CD8-positive, alpha-beta T cell (primary cell): ENCODE measurements at regions of chr11 and their contacts with region 1.

Region 1: DNA sequence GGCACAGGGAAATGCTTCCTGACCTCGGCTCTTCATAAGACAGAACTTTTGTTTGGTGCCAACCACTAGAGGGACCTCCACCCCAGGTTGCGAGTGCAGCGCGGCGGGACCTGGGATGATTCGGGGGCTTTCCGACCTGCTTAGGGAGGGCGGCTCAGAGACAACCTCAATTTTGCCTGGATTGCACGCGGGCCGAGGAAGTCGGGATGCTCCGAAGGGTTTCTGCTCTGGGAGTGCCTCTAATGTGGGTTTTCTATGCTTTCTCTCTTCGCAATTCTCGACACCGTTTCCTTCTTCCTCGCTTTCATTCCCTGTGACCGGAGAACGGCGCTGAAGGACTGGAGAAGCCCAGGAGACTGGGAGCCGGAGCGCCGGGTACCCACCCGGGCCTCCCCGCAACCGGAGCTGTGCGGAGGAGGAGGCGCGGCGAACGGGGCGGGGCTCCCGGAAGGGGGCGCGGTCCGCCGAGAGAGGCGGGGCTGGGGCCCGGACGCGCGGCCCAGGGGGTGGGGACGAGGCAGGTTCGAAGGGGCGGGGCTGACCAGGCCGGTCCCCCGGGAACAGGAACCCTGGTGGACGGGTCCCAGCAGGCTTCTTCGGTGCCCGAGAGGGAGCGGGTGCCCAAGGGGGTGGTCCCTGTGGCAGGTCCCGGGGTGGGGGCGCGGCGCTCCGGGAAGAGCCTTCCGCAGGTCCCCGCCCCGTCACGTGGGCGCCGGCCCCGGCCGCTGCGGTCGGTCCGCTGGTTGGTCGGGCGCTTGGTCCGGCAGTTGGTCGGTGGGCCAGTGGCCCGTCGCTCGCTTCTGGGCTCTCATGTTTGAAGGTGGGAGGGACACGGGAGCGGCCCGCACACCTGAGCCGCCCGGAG is at the start of gene PPFIBP2:
- DNase-seq: peak; percentile 67 to 91 (median 82)
- ATAC-seq: peak; percentile 84
- H3K4me3 ChIP-seq: peak within 1 kb of the TSS; percentile 93 to 96
- H3K4me3 Mint-ChIP-seq: peak within 1 kb of the TSS; percentile 96
- H3K27ac ChIP-seq: peak within 1 kb of the TSS; percentile 84 to 97
- H3K27ac Mint-ChIP-seq: peak within 1 kb of the TSS; percentile 96
- H3K4me1 ChIP-seq: peaks cover 43% of the 10 kb centered on the region
- H3K4me1 Mint-ChIP-seq: peaks cover 57% of the 10 kb centered on the region
- H3K27me3 ChIP-seq: no peaks in the 10 kb centered on the region
- H3K27me3 Mint-ChIP-seq: no peaks in the 10 kb centered on the region
- CTCF ChIP-seq: peak; percentile 68
- total RNA-seq, gene PPFIBP2: 21.6 to 26.7 TPM

Region 2: DNA sequence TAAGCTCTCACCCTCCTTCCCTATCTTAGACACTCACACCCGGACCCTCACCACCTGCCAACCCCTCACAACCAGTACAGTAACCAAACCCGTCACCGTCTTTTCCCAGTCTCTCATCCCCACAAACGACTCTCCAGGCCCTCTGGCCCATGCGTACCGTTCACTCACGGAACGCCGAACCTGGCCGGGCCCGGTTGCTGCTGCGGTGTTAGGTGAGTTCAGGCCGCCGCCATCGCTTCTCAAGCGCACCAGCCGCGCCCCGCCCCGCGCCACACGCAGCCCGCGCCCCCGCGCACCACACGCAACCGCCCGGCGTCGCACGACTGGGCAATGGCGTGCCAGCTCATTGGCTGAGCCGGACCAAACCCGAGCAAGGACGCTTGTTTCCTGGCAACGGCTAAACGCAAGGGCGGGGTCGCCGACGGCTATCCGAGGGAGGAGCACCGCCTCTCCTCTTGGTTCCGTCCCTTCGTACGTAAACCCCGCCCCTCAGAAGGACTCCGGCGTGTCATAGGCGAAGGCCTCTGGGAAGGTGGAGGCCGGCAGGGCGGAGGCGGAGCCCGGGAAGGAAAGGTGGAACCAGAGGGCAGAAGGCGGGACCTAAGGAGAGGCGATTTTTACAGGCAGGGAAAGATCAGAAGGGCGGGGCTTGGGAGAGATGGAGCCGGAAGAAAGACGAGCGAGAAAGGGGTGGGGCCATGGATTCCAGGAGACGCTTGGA is 1278.9 kb before region 1 on chr11 and contains the start of gene FHIP1B:
- CTCF ChIA-PET with region 1: no interaction called
- POLR2A ChIA-PET with region 1: no interaction called
- intact Hi-C with region 1: loop called in 1 of 2 experiments (anchors 10 kb)
- DNase-seq: peak; percentile 98 to 100 (median 99)
- ATAC-seq: peak; percentile 91
- H3K4me3 ChIP-seq: peak within 1 kb of the TSS; percentile 85 to 89
- H3K4me3 Mint-ChIP-seq: peak within 1 kb of the TSS; percentile 98
- H3K27ac ChIP-seq: peak within 1 kb of the TSS; percentile 76 to 88
- H3K27ac Mint-ChIP-seq: peak within 1 kb of the TSS; percentile 96
- H3K4me1 ChIP-seq: peaks cover 21% of the 10 kb centered on the region
- H3K4me1 Mint-ChIP-seq: peaks cover 45% of the 10 kb centered on the region
- H3K27me3 ChIP-seq: no peaks in the 10 kb centered on the region
- H3K27me3 Mint-ChIP-seq: no peaks in the 10 kb centered on the region
- CTCF ChIP-seq: no peak
- total RNA-seq, gene FHIP1B: 38.3 to 38.6 TPM

Region 3: DNA sequence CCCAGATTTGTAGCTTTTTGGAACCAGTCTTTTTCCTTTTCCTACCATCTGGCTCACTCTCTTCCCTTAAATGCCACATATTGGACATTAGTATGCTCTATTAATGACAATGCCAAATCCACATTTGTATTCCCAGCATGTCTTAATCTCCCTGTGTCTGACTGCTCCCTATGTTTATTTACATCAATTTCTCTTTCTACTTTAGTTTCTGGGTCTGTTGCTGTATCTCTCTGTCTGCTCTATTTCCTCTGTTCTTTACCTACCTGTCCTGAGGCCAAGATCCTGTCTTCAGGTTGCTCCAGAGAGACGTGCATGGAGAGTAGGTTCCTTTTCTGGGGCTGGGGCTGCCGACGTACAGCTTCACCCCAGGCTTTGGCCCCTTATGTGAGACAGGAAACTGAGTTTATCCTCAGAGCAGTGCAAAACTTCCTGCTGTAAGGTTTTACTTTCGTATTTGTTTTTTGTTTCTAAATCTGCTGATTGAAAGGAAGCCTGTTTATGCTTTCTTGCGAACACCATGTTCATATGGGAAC is 767.3 kb before region 1 on chr11:
- CTCF ChIA-PET with region 1: no interaction called
- POLR2A ChIA-PET with region 1: no interaction called
- intact Hi-C with region 1: loop called in 1 of 2 experiments (anchors 5 kb)
- DNase-seq: peak in 8 of 9 experiments; percentile 26 to 82 (median 55)
- ATAC-seq: peak; percentile 84
- H3K4me3 ChIP-seq: peak overlapping the region; percentile 61 to 65
- H3K4me3 Mint-ChIP-seq: no peak overlapping the region
- H3K27ac ChIP-seq: peak overlapping the region; percentile 69 to 89
- H3K27ac Mint-ChIP-seq: no peak overlapping the region
- H3K4me1 ChIP-seq: peaks cover 57% of the 10 kb centered on the region
- H3K4me1 Mint-ChIP-seq: peaks cover 46% of the 10 kb centered on the region
- H3K27me3 ChIP-seq: no peaks in the 10 kb centered on the region
- H3K27me3 Mint-ChIP-seq: no peaks in the 10 kb centered on the region
- CTCF ChIP-seq: no peak

Region 4: DNA sequence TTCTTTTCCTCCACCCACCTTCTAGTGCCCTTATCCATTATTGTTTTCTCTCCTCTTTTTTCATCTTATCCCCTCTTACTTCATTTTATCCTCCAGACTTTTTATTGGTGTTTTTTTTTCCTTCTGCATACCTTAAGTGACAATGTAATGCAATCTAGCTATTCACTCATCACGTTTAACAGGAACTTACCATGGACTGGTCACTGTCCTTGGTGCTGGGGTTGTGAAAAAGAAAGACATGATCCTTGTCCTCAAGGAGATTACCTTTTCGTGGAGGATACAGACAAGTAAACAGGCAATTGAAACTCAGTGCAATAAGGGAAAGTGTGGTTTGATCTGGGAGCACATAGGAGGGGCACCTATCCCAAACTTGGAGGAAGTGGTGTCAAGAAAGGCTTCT is 241.1 kb before region 1 on chr11:
- CTCF ChIA-PET with region 1: no interaction called
- POLR2A ChIA-PET with region 1: no interaction called
- intact Hi-C with region 1: no loop called
- DNase-seq: no peak
- ATAC-seq: no peak
- H3K4me3 ChIP-seq: no peak overlapping the region
- H3K4me3 Mint-ChIP-seq: no peak overlapping the region
- H3K27ac ChIP-seq: no peak overlapping the region
- H3K27ac Mint-ChIP-seq: no peak overlapping the region
- H3K4me1 ChIP-seq: no peaks in the 10 kb centered on the region
- H3K4me1 Mint-ChIP-seq: no peaks in the 10 kb centered on the region
- H3K27me3 ChIP-seq: no peaks in the 10 kb centered on the region
- H3K27me3 Mint-ChIP-seq: peaks cover 14% of the 10 kb centered on the region
- CTCF ChIP-seq: no peak

Region 5: DNA sequence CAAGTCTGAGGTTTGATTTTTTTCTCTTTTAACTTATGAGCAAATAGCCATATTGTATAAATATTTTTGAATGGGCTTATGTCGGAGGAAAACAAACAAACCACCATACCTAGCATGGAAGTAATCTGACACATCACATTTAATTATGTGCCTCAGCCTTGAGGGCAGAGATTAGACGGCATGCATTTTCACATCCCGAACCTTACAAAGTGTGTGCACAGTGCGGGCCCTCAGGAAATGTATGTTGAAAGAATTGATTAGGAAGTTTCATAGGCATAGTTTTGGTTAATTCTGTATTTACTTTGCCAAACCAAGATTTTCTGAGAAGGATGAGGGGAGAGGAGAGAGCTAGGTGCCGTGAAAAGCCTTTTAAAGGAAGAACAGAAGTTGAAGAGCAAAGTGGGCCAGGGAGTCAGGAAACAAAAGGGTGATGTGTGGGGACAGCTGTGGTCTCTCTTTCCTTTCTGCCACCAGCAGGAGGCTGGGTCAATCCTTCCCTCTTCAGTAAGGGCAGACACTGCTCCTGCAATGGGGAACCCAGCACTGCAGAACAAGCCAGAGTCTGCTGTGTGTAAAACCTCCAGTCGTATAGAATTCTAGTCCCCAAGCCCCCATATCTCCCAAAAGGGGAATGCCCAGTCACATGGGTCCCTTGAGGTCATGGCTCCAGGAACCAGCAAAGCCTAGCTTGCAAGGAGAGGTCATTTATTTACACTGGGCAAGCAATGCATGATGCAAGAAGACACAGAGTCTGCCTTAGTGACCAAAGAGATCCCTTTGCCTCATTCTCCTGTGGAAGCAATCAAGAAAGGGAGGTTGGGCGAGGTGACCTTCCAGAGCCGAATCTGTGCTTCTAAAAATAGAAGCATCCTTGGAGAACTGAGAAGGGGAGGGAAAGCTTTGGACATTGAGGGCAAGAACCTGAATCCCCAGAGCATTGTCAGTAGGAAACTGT is 99.2 kb before region 1 on chr11:
- CTCF ChIA-PET with region 1: no interaction called
- POLR2A ChIA-PET with region 1: no interaction called
- intact Hi-C with region 1: no loop called
- DNase-seq: no peak
- ATAC-seq: no peak
- H3K4me3 ChIP-seq: no peak overlapping the region
- H3K4me3 Mint-ChIP-seq: no peak overlapping the region
- H3K27ac ChIP-seq: no peak overlapping the region
- H3K27ac Mint-ChIP-seq: no peak overlapping the region
- H3K4me1 ChIP-seq: no peaks in the 10 kb centered on the region
- H3K4me1 Mint-ChIP-seq: no peaks in the 10 kb centered on the region
- H3K27me3 ChIP-seq: peaks cover 0 to 5% of the 10 kb centered on the region in 2 experiments
- H3K27me3 Mint-ChIP-seq: peaks cover 34% of the 10 kb centered on the region
- CTCF ChIP-seq: no peak

Region 6: GRCh38 chr11:7490054-7490453 is 23.4 kb before region 1 on chr11:
- CTCF ChIA-PET with region 1: no interaction called
- POLR2A ChIA-PET with region 1: no interaction called
- intact Hi-C with region 1: no loop called
- DNase-seq: no peak
- ATAC-seq: no peak
- H3K4me3 ChIP-seq: no peak overlapping the region
- H3K4me3 Mint-ChIP-seq: no peak overlapping the region
- H3K27ac ChIP-seq: no peak overlapping the region
- H3K27ac Mint-ChIP-seq: no peak overlapping the region
- H3K4me1 ChIP-seq: no peaks in the 10 kb centered on the region
- H3K4me1 Mint-ChIP-seq: no peaks in the 10 kb centered on the region
- H3K27me3 ChIP-seq: no peaks in the 10 kb centered on the region
- H3K27me3 Mint-ChIP-seq: no peaks in the 10 kb centered on the region
- CTCF ChIP-seq: no peak

Region 7: DNA sequence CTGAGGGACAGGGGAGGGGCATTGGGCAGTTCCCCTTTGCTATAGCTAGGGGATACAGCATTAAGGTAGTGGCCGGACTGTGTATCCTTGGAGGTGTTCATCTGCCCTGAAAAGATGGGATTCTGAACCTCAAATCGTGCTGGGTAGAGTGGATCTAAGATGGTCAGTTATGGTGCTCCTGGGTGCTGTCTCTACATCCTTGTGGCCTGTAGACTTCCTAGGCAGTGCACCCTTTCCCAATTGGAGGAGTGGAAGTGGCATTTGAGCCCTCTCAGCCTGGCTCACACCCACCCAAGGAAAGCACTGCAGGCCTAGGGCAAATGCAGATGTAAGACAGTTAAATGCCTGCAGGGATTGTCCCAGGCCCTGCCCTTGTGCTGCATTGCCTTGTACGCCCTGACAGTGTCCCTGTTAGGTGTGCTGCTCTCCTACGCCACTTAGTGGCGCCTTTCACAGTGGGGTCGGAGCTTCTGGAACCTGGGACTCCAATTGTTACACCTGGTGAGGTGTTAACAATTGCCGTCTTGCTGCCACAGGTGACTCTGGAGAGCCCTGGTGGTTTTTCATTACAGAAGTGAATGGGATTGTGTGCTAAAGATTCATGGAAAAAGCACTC is 35.3 kb after region 1 on chr11:
- CTCF ChIA-PET with region 1: interaction called, 18 read pairs
- POLR2A ChIA-PET with region 1: no interaction called
- intact Hi-C with region 1: loop called (anchors 1 kb)
- DNase-seq: peak in 2 of 9 experiments; percentile 19 to 56
- ATAC-seq: peak; percentile 61
- H3K4me3 ChIP-seq: no peak overlapping the region
- H3K4me3 Mint-ChIP-seq: no peak overlapping the region
- H3K27ac ChIP-seq: no peak overlapping the region
- H3K27ac Mint-ChIP-seq: no peak overlapping the region
- H3K4me1 ChIP-seq: no peaks in the 10 kb centered on the region
- H3K4me1 Mint-ChIP-seq: peaks cover 4% of the 10 kb centered on the region
- H3K27me3 ChIP-seq: no peaks in the 10 kb centered on the region
- H3K27me3 Mint-ChIP-seq: no peaks in the 10 kb centered on the region
- CTCF ChIP-seq: no peak

Region 8: GRCh38 chr11:7688238-7688826 is 174.9 kb after region 1 on chr11:
- CTCF ChIA-PET with region 1: interaction called, 13 read pairs
- POLR2A ChIA-PET with region 1: no interaction called
- intact Hi-C with region 1: loop called in 1 of 2 experiments (anchors 1 kb)
- DNase-seq: peak in 2 of 9 experiments; percentile 31 to 50
- ATAC-seq: no peak
- H3K4me3 ChIP-seq: no peak overlapping the region
- H3K4me3 Mint-ChIP-seq: no peak overlapping the region
- H3K27ac ChIP-seq: no peak overlapping the region
- H3K27ac Mint-ChIP-seq: no peak overlapping the region
- H3K4me1 ChIP-seq: no peaks in the 10 kb centered on the region
- H3K4me1 Mint-ChIP-seq: no peaks in the 10 kb centered on the region
- H3K27me3 ChIP-seq: peaks cover 2 to 5% of the 10 kb centered on the region in 2 experiments
- H3K27me3 Mint-ChIP-seq: peaks cover 26% of the 10 kb centered on the region
- CTCF ChIP-seq: peak; percentile 81

Region 9: DNA sequence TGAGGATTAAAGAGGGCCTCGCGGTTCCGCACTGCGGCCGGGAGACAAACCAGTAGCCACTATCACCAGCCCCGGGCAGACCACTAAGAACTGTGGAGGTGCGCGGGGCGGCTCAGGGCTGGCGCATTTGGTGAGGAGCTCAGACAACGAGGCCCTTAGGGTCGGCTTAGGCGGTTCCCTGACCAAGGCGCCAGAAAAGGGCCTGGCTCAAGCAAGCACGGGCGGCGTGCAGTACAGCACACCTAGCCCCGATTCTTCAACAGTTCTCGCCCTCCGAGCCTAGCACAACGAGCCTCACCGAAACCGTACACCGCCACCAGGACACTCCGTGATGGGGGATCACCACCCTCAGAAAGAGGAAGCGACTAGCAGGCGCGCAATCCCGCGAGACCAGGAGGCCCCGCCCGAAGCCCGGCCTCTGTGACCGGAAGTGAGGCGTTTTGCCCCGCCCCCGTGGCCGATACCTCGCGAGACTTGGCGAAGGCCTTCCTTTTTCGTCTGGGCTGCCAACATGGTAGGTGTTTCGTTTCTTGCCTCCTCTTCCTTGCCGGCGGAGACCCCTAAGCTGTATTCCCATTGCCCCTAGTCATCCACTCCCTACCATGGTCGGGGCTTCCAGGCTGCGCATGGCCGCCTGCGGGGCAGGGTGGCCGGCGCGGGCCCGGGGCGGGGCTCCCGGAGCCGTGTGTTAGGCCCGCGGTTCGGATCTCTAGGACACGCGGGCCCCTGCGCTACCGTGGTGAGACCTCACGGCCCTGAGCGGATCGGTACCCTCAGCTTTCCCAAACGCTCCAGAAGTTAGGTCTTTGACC is 1169.0 kb after region 1 on chr11 and contains the starts of genes RPL27A and TRIM66:
- CTCF ChIA-PET with region 1: no interaction called
- POLR2A ChIA-PET with region 1: no interaction called
- intact Hi-C with region 1: loop called (anchors 2 to 10 kb)
- DNase-seq: peak; percentile 98 to 100 (median 99)
- ATAC-seq: peak; percentile 92
- H3K4me3 ChIP-seq: peak within 1 kb of the TSS; percentile 63 to 99
- H3K4me3 Mint-ChIP-seq: peak within 1 kb of the TSS; percentile 96
- H3K27ac ChIP-seq: peak within 1 kb of the TSS; percentile 82 to 92
- H3K27ac Mint-ChIP-seq: peak within 1 kb of the TSS; percentile 98
- H3K4me1 ChIP-seq: peaks cover 27% of the 10 kb centered on the region
- H3K4me1 Mint-ChIP-seq: peaks cover 48% of the 10 kb centered on the region
- H3K27me3 ChIP-seq: no peaks in the 10 kb centered on the region
- H3K27me3 Mint-ChIP-seq: no peaks in the 10 kb centered on the region
- CTCF ChIP-seq: no peak
- total RNA-seq, gene RPL27A: 1,595 to 1,676 TPM
- total RNA-seq, gene TRIM66: 8.6 to 9.1 TPM